Activated CD4-positive, alpha-beta T cell treated with anti-CD3 and anti-CD28 coated beads for 36 hours (primary cell): ENCODE measurements at regions of chr15 and their contacts with region 1.

Region 1: DNA sequence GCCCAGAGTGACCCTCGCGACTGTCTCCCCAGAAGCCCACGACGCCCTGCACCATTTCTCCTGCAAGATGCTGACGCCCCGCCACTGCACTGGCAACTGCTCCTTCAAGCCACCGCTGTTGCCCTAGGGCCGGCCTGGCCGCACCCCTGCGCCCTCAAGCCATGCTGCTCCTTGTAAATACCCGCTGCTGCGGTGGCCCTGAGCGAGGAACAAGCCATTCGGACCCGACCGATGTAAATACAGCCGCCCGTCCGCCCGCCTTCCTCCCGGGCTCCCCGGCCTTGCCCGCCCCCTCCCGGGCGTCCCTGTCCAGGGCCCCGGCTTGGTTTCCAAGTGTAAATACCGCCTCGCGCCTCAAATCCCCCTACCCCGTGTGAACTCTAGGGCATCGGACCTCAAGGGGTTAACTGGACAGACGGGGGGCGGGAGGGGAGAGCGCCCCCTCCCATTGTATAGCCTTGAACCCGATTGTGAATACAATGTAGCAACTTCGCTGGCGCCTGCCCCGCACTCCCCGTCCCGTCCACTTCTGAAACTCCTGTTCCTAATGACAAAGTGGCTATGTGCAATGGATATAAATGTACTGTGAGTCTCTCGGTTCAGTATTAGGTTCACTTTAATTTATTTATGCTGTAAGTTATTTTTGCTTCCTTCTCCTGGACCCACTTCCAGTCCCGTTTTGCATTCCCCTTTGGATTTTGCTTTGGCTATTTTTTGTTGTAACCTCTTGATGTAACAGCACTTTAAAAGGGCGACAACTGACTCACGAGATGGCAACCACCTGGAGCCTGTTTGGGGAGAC is 5.9 kb downstream of the RNU6-1 start:
- DNase-seq: peak; percentile 70
- ATAC-seq: peak; percentile 57
- H3K4me3 Mint-ChIP-seq: peak overlapping the region; percentile 55
- H3K27ac Mint-ChIP-seq: no peak overlapping the region
- H3K4me1 Mint-ChIP-seq: peaks cover 36% of the 10 kb centered on the region
- H3K27me3 Mint-ChIP-seq: peaks cover 56% of the 10 kb centered on the region

Region 2: GRCh38 chr15:67501177-67501835 is 332.6 kb before region 1 on chr15:
- CTCF ChIA-PET with region 1: interaction called, 6 read pairs
- POLR2A ChIA-PET with region 1: no interaction called
- intact Hi-C with region 1: loop called (anchors 1 to 5 kb)
- DNase-seq: no peak
- ATAC-seq: no peak
- H3K4me3 Mint-ChIP-seq: no peak overlapping the region
- H3K27ac Mint-ChIP-seq: no peak overlapping the region
- H3K4me1 Mint-ChIP-seq: no peaks in the 10 kb centered on the region
- H3K27me3 Mint-ChIP-seq: no peaks in the 10 kb centered on the region